ENCODE measurements at regions of chr9 and their contacts with region 1.

Region 1: DNA sequence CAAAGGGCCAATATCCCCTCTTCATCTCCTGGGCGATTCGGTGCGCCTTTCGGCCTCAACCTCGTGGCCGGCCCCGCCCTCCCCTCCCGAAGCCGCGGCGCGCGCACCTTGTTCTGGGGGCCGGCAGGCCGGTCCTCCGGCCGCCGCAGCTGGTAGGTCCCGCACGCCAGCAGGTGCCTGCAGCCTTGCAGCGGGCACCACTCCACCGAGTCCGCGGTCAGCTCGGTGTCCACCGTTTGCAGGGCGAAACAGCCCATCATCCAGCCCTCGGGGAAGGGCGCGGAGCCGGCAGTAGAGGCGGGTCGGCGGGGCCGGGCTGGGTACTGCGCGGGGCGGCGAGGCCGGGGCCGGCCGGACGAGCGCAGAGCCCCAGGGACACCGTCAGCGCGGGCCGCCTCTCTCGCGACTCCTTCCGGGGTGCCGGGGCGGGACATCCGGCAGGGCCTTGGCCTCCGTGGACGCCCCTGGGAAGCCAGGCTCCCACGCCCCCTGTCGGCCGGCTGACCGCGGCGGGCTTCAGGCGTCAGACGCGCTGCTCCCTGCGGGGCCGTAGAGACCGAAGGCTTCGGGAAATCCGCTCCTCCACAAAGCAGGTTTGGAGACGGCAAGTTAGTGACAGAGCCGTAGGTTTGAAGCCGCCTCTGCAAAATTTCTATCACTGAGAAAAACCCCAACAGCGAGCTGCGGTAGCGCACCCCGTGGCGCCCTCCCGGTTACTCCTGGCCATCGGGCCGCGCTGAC is at the start of gene DPH7:
- DNase-seq: peak; percentile 75
- ATAC-seq: peak; percentile 94
- H3K4me3 ChIP-seq: peak within 1 kb of the TSS; percentile 61 to 91
- H3K27ac ChIP-seq: peak within 1 kb of the TSS; percentile 89
- H3K4me1 ChIP-seq: peaks cover 6 to 15% of the 10 kb centered on the region in 2 experiments; a peak in 3 of 4 replicates
- H3K27me3 ChIP-seq: no peaks in the 10 kb centered on the region
- CTCF ChIP-seq: peak; percentile 52 to 95 (median 81)
- POLR2A ChIP-seq: peak; percentile 62
- RAD21 ChIP-seq: 0 out of 2 replicates have a peak, but pooled peaks have one; percentile 18
- total RNA-seq, gene DPH7: 54.4 TPM

Region 2: DNA sequence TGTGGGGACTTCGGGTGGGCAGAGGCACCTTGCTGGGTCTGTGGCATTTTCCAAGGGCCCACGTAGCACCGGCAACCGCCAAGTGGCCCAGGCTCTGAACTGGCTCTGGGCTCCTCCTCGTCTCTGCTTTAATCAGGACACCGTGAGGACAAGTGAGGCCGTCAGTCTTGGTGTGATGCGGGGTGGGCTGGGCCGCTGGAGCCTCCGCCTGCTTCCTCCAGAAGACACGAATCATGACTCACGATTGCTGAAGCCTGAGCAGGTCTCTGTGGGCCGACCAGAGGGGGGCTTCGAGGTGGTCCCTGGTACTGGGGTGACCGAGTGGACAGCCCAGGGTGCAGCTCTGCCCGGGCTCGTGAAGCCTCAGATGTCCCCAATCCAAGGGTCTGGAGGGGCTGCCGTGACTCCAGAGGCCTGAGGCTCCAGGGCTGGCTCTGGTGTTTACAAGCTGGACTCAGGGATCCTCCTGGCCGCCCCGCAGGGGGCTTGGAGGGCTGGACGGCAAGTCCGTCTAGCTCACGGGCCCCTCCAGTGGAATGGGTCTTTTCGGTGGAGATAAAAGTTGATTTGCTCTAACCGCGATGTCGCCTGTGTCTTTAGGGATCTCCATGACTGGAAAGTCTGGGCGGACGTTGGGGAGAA is 470.0 kb before region 1 on chr9:
- CTCF ChIA-PET with region 1: no interaction called
- POLR2A ChIA-PET with region 1: no interaction called
- RAD21 ChIA-PET with region 1: no interaction called
- intact Hi-C with region 1: no loop called
- DNase-seq: no peak
- ATAC-seq: peak; percentile 18; the same call in 1 of the 2 replicates
- H3K4me3 ChIP-seq: no peak overlapping the region
- H3K27ac ChIP-seq: no peak overlapping the region
- H3K4me1 ChIP-seq: peaks cover 0 to 9% of the 10 kb centered on the region in 2 experiments; a peak in 1 of 4 replicates
- H3K27me3 ChIP-seq: no peaks in the 10 kb centered on the region
- CTCF ChIP-seq: no peak
- POLR2A ChIP-seq: no peak
- RAD21 ChIP-seq: no peak

Region 3: GRCh38 chr9:137590462-137591383 is 12.0 kb after region 1 on chr9 and contains the start of gene ZMYND19:
- CTCF ChIA-PET with region 1: interaction called, 11 read pairs
- POLR2A ChIA-PET with region 1: no interaction called
- RAD21 ChIA-PET with region 1: interaction called in 1 of 2 experiments, 3 read pairs
- intact Hi-C with region 1: no loop called
- DNase-seq: peak; percentile 62
- ATAC-seq: peak; percentile 94
- H3K4me3 ChIP-seq: peak within 1 kb of the TSS; percentile 80 to 91
- H3K27ac ChIP-seq: peak within 1 kb of the TSS; percentile 75
- H3K4me1 ChIP-seq: peaks cover 11 to 20% of the 10 kb centered on the region in 2 experiments; a peak in 2 of 4 replicates
- H3K27me3 ChIP-seq: no peaks in the 10 kb centered on the region
- CTCF ChIP-seq: 0 out of 6 replicates have a peak, but pooled peaks of 1 of the 3 experiments have one; percentile 6
- POLR2A ChIP-seq: no peak
- RAD21 ChIP-seq: no peak
- total RNA-seq, gene ZMYND19: 57.4 TPM

Region 4: GRCh38 chr9:137611623-137612463 is 33.2 kb after region 1 on chr9:
- CTCF ChIA-PET with region 1: no interaction called
- POLR2A ChIA-PET with region 1: no interaction called
- RAD21 ChIA-PET with region 1: no interaction called
- intact Hi-C with region 1: loop called (anchors 5 kb)
- DNase-seq: peak; percentile 90
- ATAC-seq: peak; percentile 82
- H3K4me3 ChIP-seq: peak overlapping the region; percentile 29 to 62
- H3K27ac ChIP-seq: peak overlapping the region; percentile 99
- H3K4me1 ChIP-seq: peaks cover 42 to 68% of the 10 kb centered on the region in 2 experiments
- H3K27me3 ChIP-seq: no peaks in the 10 kb centered on the region
- CTCF ChIP-seq: no peak
- POLR2A ChIP-seq: peak; percentile 46
- RAD21 ChIP-seq: no peak

Measured in HCT116 (cell line).